ENCODE measurements at regions of chr7 and their contacts with region 1.

Region 1: DNA sequence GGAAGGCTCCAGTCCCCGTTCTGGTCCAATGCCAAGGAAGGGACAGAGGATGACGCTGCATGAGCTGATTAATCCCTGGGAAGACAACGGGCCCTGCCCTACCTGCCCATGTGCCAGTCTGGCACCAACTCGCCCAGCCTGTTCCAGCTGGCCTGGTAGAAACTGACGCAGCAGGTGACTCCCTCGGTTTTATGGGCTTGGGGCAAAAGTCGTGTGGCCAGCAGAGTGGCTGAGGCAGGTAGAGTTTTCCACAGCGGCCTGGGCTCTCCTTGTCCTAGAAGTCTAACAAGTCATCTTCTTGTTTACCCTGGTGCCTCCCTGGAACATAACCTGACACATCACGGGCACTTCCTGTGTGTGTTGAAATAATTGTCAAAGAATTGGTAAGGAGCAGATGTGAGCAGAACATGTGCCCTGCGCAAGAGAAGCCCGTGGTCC is 20.4 kb upstream of the LMTK2 start:
- DNase-seq: no peak
- ATAC-seq: no peak
- H3K4me3 ChIP-seq: no peak overlapping the region
- H3K27ac ChIP-seq: no peak overlapping the region
- H3K4me1 ChIP-seq: no peaks in the 10 kb centered on the region
- H3K27me3 ChIP-seq: peaks cover 2% of the 10 kb centered on the region; the same call in 1 of the 2 replicates
- CTCF ChIP-seq: no peak
- POLR2A ChIP-seq: no peak
- RAD21 ChIP-seq: no peak

Region 2: GRCh38 chr7:98223898-98224840 is 137.9 kb after region 1 on chr7:
- CTCF ChIA-PET with region 1: no interaction called
- POLR2A ChIA-PET with region 1: no interaction called
- dilution Hi-C with region 1: no loop called
- in situ Hi-C with region 1: no loop called
- intact Hi-C with region 1: no loop called
- DNase-seq: no peak
- ATAC-seq: no peak
- H3K4me3 ChIP-seq: no peak overlapping the region
- H3K27ac ChIP-seq: no peak overlapping the region
- H3K4me1 ChIP-seq: peaks cover 3% of the 10 kb centered on the region
- H3K27me3 ChIP-seq: no peaks in the 10 kb centered on the region
- CTCF ChIP-seq: no peak
- POLR2A ChIP-seq: no peak
- RAD21 ChIP-seq: no peak

Region 3: DNA sequence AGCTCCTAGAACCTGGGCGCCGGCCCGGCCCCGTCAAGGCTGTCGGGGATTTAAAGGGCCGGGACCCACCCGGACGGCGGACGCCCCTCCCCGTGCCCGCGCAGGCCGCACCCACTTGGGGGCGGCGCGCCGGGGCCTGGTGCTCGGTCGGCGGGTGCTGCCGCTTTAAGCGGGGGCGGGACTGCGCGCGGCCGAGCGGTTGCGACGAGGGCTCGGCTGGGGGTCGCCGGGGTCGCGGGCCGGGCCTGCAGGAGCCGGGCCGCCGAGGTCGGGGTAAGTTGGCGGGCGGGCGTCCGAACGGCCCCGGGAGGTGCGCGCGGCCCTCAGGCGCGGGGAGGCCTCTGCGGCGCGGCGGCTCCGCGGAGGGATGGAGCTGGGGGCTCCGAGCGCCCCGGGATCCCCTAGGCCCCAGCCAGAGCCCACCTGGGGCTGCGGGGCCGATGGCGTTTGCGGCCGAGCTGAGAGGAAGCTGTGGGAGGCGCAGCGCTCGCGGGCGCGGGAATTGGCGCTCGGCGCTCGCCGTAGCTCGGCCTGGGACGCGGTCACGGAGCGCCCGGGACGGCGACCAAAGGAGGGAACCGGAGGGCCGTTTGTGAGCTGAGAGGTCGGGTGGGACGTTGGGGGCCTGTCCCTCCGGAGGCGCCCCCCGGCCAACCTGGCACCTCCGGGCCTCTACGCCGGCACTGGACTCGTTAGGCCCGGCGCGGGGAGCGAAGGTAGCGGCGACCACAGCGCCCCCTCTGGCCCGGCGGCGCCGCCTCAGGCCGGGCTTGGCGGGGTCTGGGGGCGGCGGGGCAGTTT is 792.3 kb after region 1 on chr7 and contains the start of gene TRRAP:
- CTCF ChIA-PET with region 1: no interaction called
- POLR2A ChIA-PET with region 1: interaction called, 14 read pairs
- dilution Hi-C with region 1: no loop called
- in situ Hi-C with region 1: no loop called
- intact Hi-C with region 1: no loop called
- DNase-seq: peak; percentile 62
- ATAC-seq: peak; percentile 94
- H3K4me3 ChIP-seq: peak within 1 kb of the TSS; percentile 99
- H3K27ac ChIP-seq: peak within 1 kb of the TSS; percentile 97
- H3K4me1 ChIP-seq: peaks cover 9% of the 10 kb centered on the region
- H3K27me3 ChIP-seq: no peaks in the 10 kb centered on the region
- CTCF ChIP-seq: peak; percentile 73
- POLR2A ChIP-seq: peak; percentile 55
- RAD21 ChIP-seq: peak; percentile 29; the same call in 1 of the 2 replicates
- total RNA-seq, gene TRRAP: 12.5 TPM in 2 replicates